Testis (tissue), 5 donors: ENCODE measurements at regions of chr4 and their contacts with region 1.

Region 1: GRCh38 chr4:146338512-146338911 is 124.2 kb downstream of the REELD1 start:
- DNase-seq: no peak
- H3K4me3 ChIP-seq: no peak overlapping the region
- H3K27ac ChIP-seq: no peak overlapping the region
- H3K4me1 ChIP-seq: no peaks in the 10 kb centered on the region
- H3K27me3 ChIP-seq: no peaks in the 10 kb centered on the region
- CTCF ChIP-seq: no peak
- POLR2A ChIP-seq: no peak

Region 2: GRCh38 chr4:146159384-146160058 is 179.0 kb before region 1 on chr4:
- intact Hi-C with region 1: no loop called
- DNase-seq: no peak
- H3K4me3 ChIP-seq: no peak overlapping the region
- H3K27ac ChIP-seq: no peak overlapping the region
- H3K4me1 ChIP-seq: no peaks in the 10 kb centered on the region
- H3K27me3 ChIP-seq: no peaks in the 10 kb centered on the region
- CTCF ChIP-seq: no peak
- POLR2A ChIP-seq: no peak

Region 3: GRCh38 chr4:146458594-146458993 is 120.1 kb after region 1 on chr4:
- intact Hi-C with region 1: no loop called
- DNase-seq: no peak
- H3K4me3 ChIP-seq: no peak overlapping the region
- H3K27ac ChIP-seq: no peak overlapping the region
- H3K4me1 ChIP-seq: no peaks in the 10 kb centered on the region
- H3K27me3 ChIP-seq: no peaks in the 10 kb centered on the region
- CTCF ChIP-seq: no peak
- POLR2A ChIP-seq: no peak

Region 4: GRCh38 chr4:146916479-146917076 is 578.1 kb after region 1 on chr4:
- intact Hi-C with region 1: loop called (anchors 5 kb)
- DNase-seq: peak; percentile 28
- H3K4me3 ChIP-seq: no peak overlapping the region
- H3K27ac ChIP-seq: no peak overlapping the region
- H3K4me1 ChIP-seq: no peaks in the 10 kb centered on the region
- H3K27me3 ChIP-seq: no peaks in the 10 kb centered on the region
- CTCF ChIP-seq: peak in 2 of 3 experiments; percentile 54 to 62
- POLR2A ChIP-seq: no peak